SK-N-SH (cell line): ENCODE measurements at regions of chr3 and their contacts with region 1.

Region 1: GRCh38 chr3:127544192-127544802 is 46.2 kb downstream of the TPRA1 start:
- DNase-seq: peak; percentile 91
- H3K4me3 ChIP-seq: no peak overlapping the region; a peak in 1 of 4 replicates
- H3K27ac ChIP-seq: no peak overlapping the region
- H3K4me1 ChIP-seq: peaks cover 0 to 29% of the 10 kb centered on the region in 2 experiments; a peak in 1 of 4 replicates
- H3K27me3 ChIP-seq: no peaks in the 10 kb centered on the region
- CTCF ChIP-seq: peak; percentile 75
- EP300 ChIP-seq: no peak
- RAD21 ChIP-seq: peak; percentile 81

Region 2: DNA sequence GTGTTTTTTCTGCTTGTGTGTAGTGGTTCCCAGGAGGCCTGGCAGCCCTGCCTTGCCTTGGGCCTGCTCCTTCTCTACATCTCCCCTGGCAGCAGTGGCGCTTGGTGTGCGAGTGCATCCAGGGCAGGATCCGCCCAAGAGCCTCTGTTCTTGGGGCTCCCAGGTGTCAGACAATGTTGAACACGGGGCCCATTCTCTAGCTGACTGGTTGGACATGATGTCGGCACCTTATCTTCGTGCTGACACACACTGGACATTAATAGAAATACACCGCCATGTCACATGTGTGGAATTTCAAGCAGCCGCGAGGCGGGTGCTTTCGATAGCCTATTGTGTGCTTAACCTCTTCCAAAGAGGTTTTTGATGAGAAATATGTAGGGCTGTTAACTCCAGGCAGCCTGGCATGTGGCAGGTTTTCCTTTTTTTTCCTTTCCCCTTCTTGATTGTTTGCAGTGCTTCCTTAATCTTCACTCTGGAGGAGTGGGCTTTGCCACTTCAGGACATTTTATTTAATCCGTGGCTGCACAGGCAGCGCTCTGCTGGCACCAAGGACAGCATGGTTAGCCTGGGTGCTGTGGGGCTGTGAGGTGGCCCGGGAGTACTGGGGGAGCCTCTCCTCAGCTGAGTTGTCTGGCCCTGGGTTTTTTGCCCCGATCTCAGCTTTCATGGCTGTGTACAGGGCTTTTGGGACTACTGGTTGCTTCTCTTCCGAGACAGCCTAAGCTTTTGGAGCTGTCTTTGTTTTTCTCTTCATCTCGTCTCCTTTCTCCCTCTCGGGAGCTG is 797.7 kb before region 1 on chr3:
- CTCF ChIA-PET with region 1: interaction called, 35 read pairs
- POLR2A ChIA-PET with region 1: no interaction called
- DNase-seq: peak; percentile 43
- H3K4me3 ChIP-seq: no peak overlapping the region
- H3K27ac ChIP-seq: peak overlapping the region in 1 of 2 experiments; percentile 36; a peak in 1 of 4 replicates
- H3K4me1 ChIP-seq: peaks cover 0 to 80% of the 10 kb centered on the region in 2 experiments; a peak in 1 of 4 replicates
- H3K27me3 ChIP-seq: no peaks in the 10 kb centered on the region
- CTCF ChIP-seq: 0 out of 2 replicates have a peak, but pooled peaks have one; percentile 12
- EP300 ChIP-seq: no peak
- RAD21 ChIP-seq: peak; percentile 40

Region 3: DNA sequence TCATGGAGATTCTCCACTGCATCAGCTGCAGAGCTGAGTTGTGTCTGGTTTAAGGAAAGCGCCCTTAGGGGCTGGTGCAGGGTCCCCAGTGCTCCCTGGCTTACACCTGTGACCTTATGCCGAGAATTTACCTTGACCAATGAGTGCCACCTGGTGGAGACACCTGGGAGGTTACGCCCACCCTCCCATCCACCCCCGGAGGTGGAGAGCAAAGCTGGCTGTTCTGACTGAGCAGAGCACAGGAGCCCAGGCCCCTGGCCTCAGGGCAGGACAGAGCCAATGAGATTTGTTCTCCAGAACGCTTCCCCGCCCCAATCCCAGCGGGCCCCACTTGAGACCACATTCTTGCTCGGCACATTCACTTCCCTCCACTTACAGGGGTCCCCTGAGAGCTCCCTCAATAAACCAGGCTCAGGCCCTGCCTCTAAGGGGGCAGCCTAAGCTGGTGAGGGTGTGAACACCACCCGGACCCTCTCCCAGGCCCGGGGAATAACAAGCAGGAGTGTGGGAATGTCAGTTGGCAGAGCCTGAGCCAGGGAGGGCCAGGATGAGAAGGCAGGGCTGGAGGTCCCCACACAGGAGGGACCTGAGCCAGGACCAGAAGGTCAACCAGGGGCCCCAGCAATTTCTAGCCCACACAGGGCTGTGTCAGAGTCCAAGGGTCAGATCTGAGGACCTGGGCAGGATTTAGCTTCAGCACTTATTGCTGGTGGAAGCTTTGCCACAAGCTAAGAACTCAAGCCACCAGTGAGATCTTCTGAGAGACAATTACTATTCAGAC is 70.9 kb before region 1 on chr3:
- CTCF ChIA-PET with region 1: interaction called, 16 read pairs
- POLR2A ChIA-PET with region 1: no interaction called
- DNase-seq: peak; percentile 79
- H3K4me3 ChIP-seq: no peak overlapping the region
- H3K27ac ChIP-seq: no peak overlapping the region
- H3K4me1 ChIP-seq: peaks cover 0 to 4% of the 10 kb centered on the region in 2 experiments; a peak in 1 of 4 replicates
- H3K27me3 ChIP-seq: peaks cover 2% of the 10 kb centered on the region; the same call in 1 of the 2 replicates
- CTCF ChIP-seq: peak; percentile 37; the same call in 1 of the 2 replicates
- EP300 ChIP-seq: no peak
- RAD21 ChIP-seq: peak; percentile 54

Region 4: GRCh38 chr3:127556565-127556964 is 12.3 kb after region 1 on chr3:
- CTCF ChIA-PET with region 1: interaction called, 12 read pairs
- POLR2A ChIA-PET with region 1: no interaction called
- DNase-seq: no peak
- H3K4me3 ChIP-seq: no peak overlapping the region
- H3K27ac ChIP-seq: no peak overlapping the region
- H3K4me1 ChIP-seq: peaks cover 0 to 13% of the 10 kb centered on the region in 2 experiments; a peak in 2 of 4 replicates
- H3K27me3 ChIP-seq: no peaks in the 10 kb centered on the region
- CTCF ChIP-seq: peak; percentile 32
- EP300 ChIP-seq: no peak
- RAD21 ChIP-seq: 0 out of 2 replicates have a peak, but pooled peaks have one; percentile 8